Activated naive CD4-positive, alpha-beta T cell treated with anti-CD3 and anti-CD28 coated beads for 36 hours (primary cell): ENCODE measurements at regions of chr16 and their contacts with region 1.

Region 1: DNA sequence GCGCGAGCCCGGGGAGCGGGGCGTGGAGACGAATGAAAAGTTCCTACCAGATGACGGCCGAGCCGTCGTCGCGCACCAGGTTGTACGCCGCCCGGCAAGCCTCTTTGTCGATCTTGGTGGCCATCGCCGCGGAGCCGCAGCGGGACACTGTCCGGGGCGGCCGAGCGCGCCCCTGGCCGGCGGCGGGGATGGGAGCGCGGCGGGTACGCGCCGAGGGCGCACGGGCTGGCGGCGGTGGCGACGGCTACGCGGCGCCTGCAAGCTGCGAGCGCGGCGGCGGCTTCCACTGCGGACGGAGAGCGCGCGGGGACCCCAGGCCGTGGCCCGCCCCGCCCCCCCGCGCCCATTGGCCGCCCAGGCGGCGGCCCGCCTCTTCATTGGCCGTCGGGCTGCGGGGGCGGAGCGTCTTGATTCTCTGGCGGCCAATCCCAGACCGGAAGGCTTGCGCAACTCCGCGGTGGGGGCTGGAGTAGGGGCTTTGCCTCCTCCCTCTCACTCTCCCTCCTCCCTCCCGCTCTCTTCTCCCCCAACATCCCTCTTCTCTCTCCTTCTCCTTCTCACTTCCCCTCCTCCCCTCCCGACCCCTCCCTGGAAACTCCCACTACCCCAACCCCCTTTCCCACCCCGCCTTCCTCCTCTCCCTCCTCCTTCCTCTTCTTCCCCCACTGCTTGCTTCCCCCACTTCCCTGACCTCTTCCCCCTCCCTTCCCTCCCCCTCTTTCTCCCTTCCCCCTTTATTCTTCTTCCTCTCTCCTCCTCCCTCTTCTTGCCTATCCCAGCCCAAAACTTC is at the start of gene COTL1:
- DNase-seq: peak; percentile 96
- H3K4me3 Mint-ChIP-seq: peak within 1 kb of the TSS; percentile 96
- H3K27ac Mint-ChIP-seq: peak within 1 kb of the TSS; percentile 77
- H3K4me1 Mint-ChIP-seq: peaks cover 35% of the 10 kb centered on the region
- H3K27me3 Mint-ChIP-seq: no peaks in the 10 kb centered on the region
- total RNA-seq, gene COTL1: 325 to 328 TPM

Region 2: DNA sequence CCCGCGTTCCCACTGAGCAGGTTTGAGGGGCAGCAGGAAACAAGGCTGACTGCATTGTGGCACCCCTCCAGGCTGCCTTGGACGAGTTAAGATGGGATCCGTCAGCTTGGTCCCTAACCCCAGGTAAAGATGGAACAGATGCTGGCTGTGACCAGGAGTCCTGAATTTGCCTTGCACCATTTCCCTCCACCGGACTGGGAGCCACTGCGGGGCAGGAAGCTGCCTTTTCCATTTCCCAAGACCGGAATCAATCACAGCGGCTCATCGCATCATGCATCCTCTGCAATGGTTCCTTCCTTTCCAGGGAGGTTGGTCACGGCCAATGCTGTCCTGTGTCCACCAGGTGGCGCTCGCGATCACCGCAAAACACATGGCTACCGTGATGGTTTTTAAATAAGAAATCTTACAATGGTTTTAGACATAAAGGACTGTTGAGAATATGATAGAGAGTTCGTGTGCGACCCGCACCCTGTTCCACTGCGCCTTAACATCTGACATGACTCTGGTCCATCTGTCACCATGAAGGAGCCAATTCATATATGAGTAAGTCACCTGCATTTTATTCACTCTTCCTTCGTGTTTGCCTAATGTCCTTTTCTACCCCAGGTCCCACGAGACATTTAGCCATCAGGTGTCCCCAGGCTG is 106.7 kb before region 1 on chr16:
- CTCF ChIA-PET with region 1: interaction called, 141 read pairs
- intact Hi-C with region 1: loop called (anchors 1 kb)
- DNase-seq: peak; percentile 86
- H3K4me3 Mint-ChIP-seq: no peak overlapping the region
- H3K27ac Mint-ChIP-seq: no peak overlapping the region
- H3K4me1 Mint-ChIP-seq: peaks cover 64% of the 10 kb centered on the region
- H3K27me3 Mint-ChIP-seq: no peaks in the 10 kb centered on the region

Region 3: DNA sequence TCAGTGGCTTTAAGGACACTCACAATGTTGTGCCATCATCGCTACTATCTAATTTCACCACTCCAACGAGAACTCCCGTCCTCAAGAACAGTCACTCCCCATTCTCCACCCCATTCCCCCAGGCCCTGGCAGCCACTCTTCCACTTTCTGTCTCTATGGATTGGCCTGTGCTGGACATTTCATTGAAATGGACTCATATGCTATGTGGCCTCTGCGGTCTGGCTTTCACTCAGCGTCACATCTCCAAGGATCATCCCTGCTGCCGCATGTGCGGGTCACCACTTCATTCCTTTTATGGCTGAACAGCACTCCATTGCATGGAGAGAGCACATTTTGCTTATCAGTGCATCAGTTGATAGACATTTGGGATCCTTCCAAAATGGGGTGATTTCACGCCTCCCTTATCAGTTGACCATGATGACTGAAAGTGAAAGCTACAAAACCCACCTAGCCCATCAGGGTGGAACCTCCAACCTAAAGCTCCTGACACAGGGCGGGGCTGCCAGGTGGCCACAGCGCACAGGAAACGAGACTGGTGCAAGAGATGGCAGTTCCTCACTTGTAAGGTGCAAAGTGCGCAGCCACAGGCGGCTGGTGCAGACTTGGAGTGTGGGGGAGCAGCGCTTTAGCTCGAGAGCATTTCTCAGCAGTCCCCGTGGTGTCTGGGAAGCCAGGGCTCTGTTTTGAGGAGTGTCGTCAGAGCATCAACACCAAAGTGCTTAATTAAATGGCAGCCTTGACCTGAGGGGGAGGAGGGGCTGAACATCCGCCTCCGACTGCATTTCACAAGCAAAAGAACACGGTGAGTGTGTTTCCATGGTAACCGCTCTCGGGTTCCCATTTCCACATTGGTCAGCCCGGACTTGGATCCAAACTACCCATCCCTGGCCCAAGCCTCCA is 23.9 kb before region 1 on chr16:
- CTCF ChIA-PET with region 1: interaction called, 13 read pairs
- intact Hi-C with region 1: loop called (anchors 1 kb)
- DNase-seq: peak; percentile 85
- H3K4me3 Mint-ChIP-seq: peak overlapping the region; percentile 63
- H3K27ac Mint-ChIP-seq: peak overlapping the region; percentile 76
- H3K4me1 Mint-ChIP-seq: peaks cover 62% of the 10 kb centered on the region
- H3K27me3 Mint-ChIP-seq: no peaks in the 10 kb centered on the region

Region 4: DNA sequence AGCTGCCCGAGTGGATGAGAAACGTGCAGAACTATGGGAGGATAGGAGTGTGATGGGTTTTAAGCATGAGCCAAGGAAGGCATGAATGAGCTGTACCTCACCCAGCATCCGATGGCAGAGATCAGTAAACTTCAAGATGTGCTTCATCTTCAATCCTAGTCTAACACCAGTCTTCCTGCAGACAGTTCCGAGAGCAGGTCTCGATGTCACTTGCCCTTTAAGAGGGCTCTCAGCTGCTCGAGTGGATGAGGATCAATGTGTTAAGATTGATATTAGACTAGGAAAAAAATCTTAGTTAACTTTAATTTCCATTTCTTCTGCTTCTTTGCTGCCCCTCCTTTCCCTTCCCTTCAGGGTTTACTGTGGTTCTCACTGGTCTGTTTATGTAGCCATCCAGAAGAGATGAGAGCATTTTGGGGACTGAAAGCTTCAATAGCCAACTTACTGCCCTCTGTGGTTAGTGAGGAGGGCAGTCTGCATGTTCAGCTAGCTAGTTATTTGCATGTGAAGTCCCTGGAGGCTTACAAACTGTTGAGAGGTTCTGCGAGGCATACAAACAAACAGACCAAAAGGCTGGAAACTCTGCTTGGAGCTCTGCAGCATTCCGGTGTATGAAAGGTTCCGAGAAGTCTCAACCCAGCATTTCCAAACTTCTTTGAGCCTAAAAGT is 45.6 kb after region 1 on chr16:
- CTCF ChIA-PET with region 1: interaction called, 13 read pairs
- intact Hi-C with region 1: no loop called
- DNase-seq: no peak
- H3K4me3 Mint-ChIP-seq: no peak overlapping the region
- H3K27ac Mint-ChIP-seq: no peak overlapping the region
- H3K4me1 Mint-ChIP-seq: peaks cover 17% of the 10 kb centered on the region
- H3K27me3 Mint-ChIP-seq: no peaks in the 10 kb centered on the region

Region 5: DNA sequence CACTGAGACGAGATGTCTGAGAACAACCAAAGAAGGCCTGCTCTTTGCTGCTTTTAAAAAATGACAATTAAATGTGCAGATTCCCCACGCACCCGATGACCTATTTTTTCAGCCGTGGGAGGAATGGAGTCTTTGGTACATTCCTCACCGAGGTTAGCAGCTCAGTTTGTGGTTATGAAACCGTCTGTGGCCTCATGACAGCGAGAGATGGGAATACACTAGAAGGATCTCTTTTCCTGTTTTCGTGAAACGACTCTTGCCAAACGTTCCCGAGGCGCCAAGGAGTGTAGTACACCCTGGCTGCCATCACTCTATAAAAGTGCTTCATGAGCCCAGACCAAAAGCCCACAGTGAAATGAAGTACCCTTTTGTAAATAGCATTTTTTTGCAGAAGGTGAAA is 289.6 kb after region 1 on chr16:
- CTCF ChIA-PET with region 1: no interaction called
- intact Hi-C with region 1: no loop called
- DNase-seq: no peak
- H3K4me3 Mint-ChIP-seq: no peak overlapping the region
- H3K27ac Mint-ChIP-seq: no peak overlapping the region
- H3K4me1 Mint-ChIP-seq: no peaks in the 10 kb centered on the region
- H3K27me3 Mint-ChIP-seq: no peaks in the 10 kb centered on the region

Region 6: DNA sequence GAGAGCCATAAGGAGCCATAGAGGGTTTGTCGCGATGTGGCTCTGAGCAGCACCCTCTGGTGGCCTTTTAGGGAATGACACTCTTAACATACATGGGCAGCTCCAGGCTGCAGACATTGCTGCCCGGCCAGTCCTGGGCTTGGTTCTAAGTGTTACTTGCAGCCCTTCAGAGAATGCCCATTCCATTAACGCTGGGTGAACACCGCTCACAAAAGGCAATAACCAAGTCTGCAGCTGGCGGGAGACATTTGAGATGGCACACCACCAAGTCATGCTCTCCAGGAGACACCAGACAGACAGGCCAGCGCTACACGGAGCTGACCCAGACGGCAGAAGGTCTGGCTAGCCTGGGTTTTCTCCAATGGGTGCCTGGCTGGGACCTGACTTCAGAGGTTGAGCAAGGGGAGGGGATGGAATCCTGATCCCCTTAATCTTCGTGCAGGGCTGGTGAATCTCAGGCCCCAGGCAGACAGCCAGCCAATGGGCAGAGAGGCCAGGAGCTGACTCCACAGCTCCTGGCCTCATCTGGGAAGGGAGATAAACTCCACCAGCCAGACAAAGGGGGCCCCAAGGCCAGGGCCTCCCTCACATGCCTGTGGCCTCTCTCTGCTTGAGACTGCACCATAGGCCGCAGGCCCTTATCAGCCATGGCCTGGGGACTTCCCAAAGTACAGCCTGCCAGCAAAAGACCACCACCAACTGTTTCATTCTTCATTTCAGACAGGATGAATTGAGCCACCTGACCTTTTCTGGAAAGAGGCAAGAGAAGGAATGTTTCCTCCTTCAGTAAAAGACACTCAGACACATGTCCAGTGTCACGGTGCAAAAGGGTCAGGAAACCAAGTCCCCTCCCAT is 334.6 kb after region 1 on chr16:
- CTCF ChIA-PET with region 1: no interaction called
- intact Hi-C with region 1: loop called (anchors 1 kb)
- DNase-seq: peak; percentile 83
- H3K4me3 Mint-ChIP-seq: no peak overlapping the region
- H3K27ac Mint-ChIP-seq: no peak overlapping the region
- H3K4me1 Mint-ChIP-seq: no peaks in the 10 kb centered on the region
- H3K27me3 Mint-ChIP-seq: no peaks in the 10 kb centered on the region